ENCODE measurements at regions of chr4 and their contacts with region 1.

Region 1: GRCh38 chr4:145260091-145260490 is 79.7 kb upstream of the OTUD4 start:
- DNase-seq: no peak
- ATAC-seq: no peak

Region 2: GRCh38 chr4:145324161-145324560 is 64.1 kb after region 1 on chr4:
- intact Hi-C with region 1: loop called (anchors 2 kb)
- DNase-seq: no peak
- ATAC-seq: peak; percentile 81

Region 3: GRCh38 chr4:145420595-145421214 is 160.6 kb after region 1 on chr4:
- intact Hi-C with region 1: no loop called
- DNase-seq: no peak
- ATAC-seq: no peak

Measured in sciatic nerve (tissue), 2 donors.